Heart left ventricle (tissue), 16 donors: ENCODE measurements at regions of chr2 and their contacts with region 1.

Region 1: DNA sequence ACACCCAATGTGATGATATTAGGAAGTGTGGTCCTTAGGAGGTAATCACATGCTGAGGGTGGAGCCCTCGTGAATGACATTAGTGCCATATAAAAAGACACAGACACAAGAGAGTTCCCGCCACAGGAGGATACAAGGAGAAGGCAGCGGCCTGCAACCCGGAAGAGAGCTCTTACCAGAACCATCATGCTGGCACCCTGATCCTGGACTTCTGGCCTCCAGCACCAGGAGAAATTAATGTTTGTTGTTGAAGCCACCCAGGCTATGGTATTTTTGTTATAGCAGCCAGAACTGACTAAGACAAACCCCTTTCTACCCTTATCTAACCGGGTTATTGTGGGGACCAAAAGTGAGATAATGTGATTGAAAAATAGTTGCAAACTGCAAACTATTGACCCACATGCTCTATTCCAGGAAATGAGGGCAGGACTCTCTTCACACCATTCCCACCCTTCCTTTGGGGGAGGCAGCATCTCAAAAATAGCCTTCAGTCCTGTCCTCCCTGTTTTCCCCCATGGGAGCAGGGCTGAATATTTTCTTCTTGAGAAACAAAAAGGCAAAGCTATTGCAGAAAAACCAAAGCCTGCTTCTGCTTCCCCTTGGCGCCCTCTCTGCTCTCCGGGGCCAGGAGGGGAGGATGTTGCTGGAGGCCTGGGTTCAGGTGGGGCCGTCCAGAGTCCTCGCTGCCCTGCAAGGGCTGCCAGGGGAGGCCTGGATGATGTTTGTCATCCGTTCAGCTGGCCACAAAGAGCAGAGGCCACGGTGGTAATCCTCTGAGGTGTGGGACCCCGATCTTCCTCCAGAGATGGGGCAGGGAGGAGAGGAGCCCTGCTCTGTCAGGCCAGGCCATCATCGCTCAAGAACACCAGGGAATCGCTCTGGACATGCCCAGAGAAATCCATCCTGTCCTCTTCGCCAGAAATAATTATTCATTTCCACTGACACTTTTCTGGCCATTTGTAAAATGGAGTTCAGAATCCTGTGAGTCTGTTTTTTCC is 73.8 kb upstream of the HAAO start:
- DNase-seq: peak in 4 of 5 donors; percentile 47 to 74 (median 68)
- ATAC-seq: peak; percentile 67 to 84 (median 74)
- H3K4me3 ChIP-seq: no peak overlapping the region
- H3K27ac ChIP-seq: peak overlapping the region; percentile 73 to 92 (median 82)
- H3K4me1 ChIP-seq: peaks cover 0 to 30% (median 20%) of the 10 kb centered on the region in 12 donors
- H3K27me3 ChIP-seq: no peaks in the 10 kb centered on the region
- CTCF ChIP-seq: no peak
- POLR2A ChIP-seq: no peak

Region 2: GRCh38 chr2:42906557-42907411 is 40.6 kb after region 1 on chr2:
- intact Hi-C with region 1: loop called in 1 of 10 experiments (anchors 5 kb)
- DNase-seq: peak; percentile 55 to 81 (median 65)
- ATAC-seq: peak; percentile 52 to 72 (median 71)
- H3K4me3 ChIP-seq: peak overlapping the region in 5 of 12 donors; percentile 9 to 31 (median 14)
- H3K27ac ChIP-seq: peak overlapping the region; percentile 57 to 90 (median 76)
- H3K4me1 ChIP-seq: peaks cover 5 to 73% (median 53%) of the 10 kb centered on the region in 12 donors
- H3K27me3 ChIP-seq: no peaks in the 10 kb centered on the region
- CTCF ChIP-seq: no peak
- POLR2A ChIP-seq: no peak

Region 3: GRCh38 chr2:42922790-42923579 is 56.8 kb after region 1 on chr2:
- intact Hi-C with region 1: loop called in 6 of 10 experiments (anchors 2 to 10 kb)
- DNase-seq: peak in 1 of 5 donors; percentile 20
- ATAC-seq: peak in 2 of 4 donors; percentile 17 to 36
- H3K4me3 ChIP-seq: no peak overlapping the region
- H3K27ac ChIP-seq: peak overlapping the region; percentile 85 to 98 (median 91)
- H3K4me1 ChIP-seq: peaks cover 28 to 70% (median 58%) of the 10 kb centered on the region in 12 donors
- H3K27me3 ChIP-seq: no peaks in the 10 kb centered on the region
- CTCF ChIP-seq: no peak
- POLR2A ChIP-seq: no peak

Region 4: DNA sequence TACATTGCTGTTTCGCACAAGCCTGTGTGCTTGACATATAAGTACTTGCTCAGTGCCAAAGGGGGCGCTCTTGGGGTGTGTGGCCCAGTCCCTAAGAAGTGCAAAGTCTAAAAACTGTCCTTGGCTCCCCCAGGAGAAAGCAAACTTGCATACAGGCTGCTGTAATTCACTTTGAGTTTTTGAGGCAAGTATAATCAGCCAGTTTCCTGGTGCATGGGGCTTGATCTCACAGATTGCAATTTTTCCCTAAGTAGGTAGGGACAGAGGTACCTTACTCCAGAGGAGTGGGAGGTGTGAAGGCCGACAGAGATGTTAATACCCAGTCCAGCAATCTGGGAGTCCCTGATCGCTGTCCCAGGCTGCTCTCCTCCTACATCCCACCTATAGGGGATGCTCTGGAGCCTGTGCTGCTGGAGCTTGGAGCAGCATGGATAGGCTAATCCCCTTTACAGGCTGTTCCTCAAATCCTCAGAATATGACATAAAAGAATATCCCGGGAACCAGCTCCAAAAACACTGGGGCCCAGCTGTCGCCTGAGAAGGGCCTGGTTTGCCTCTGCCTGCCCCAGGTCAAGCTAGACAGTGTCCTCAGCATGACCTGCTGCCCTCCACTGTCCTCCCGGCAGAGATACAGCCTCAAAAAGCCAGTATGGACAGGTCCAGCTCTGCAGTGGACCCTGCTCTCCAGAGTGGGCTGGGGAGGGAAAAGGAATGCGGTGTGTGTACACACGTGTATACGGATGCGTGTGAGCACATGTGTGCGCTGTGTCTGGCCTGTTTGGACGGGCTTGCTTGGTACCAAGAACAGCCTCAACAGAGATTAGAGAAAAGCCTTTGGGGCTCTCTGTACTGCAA is 62.7 kb after region 1 on chr2:
- intact Hi-C with region 1: loop called in 6 of 10 experiments (anchors 2 to 10 kb)
- DNase-seq: peak in 1 of 5 donors; percentile 55
- ATAC-seq: peak in 1 of 4 donors; percentile 8
- H3K4me3 ChIP-seq: no peak overlapping the region
- H3K27ac ChIP-seq: peak overlapping the region; percentile 74 to 98 (median 88)
- H3K4me1 ChIP-seq: peaks cover 33 to 100% (median 96%) of the 10 kb centered on the region in 12 donors
- H3K27me3 ChIP-seq: no peaks in the 10 kb centered on the region
- CTCF ChIP-seq: peak in 7 of 12 donors; percentile 22 to 54 (median 40)
- POLR2A ChIP-seq: no peak

Region 5: DNA sequence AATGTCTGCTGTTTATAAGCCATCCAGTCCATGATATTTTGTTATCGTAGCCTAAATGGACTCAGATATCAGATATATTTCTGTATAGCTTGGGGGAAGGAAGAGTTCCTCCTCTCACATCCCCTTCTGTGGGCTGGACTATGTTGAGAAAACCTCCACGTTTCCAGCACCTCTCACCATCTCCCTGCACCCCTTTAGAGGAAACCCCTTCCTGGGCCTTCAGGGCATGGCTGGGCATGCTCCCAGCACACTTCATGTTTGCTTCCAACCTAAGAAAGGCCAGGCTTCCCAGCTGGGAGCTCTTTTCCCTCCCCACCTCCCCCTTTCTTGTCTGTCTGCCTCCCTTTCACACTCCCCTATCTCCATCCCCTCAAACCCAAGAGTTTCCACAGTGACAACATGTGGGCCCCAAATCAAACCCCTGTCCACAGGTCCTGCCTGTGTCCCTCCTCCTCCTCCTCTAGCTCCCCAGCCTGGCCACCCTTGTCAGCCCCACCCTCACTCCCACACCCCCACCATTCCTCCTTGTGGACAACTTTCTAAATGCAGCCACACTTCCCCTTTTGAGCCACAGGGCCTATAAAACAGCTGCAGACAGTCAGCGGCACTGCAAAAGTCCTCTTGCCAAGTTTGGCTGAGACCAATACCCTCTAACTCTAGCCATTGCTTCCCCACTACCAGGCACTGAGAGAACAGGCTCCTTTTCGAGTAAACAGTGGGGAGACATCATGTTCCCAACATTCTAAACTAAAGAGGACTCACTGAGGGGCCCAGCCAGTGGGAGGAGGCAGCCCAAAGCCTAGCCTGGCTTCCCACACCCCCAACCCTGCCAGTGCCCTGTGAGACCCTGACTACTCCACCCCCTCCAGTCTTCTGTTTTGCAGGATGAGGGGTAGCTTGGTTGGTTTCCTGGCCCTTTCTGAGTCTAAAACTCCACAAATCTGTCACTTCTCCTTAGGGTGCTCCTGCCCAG is 239.7 kb after region 1 on chr2:
- intact Hi-C with region 1: loop called in 1 of 10 experiments (anchors 10 kb)
- DNase-seq: peak; percentile 65 to 83 (median 69)
- ATAC-seq: peak; percentile 33 to 64 (median 56)
- H3K4me3 ChIP-seq: no peak overlapping the region
- H3K27ac ChIP-seq: peak overlapping the region; percentile 38 to 90 (median 72)
- H3K4me1 ChIP-seq: peaks cover 0 to 91% (median 41%) of the 10 kb centered on the region in 12 donors
- H3K27me3 ChIP-seq: no peaks in the 10 kb centered on the region
- CTCF ChIP-seq: peak in 8 of 12 donors; percentile 8 to 44 (median 29)
- POLR2A ChIP-seq: no peak